ENCODE measurements at regions of chr5 and their contacts with region 1.

Region 1: GRCh38 chr5:42908509-42909488 is 97.1 kb upstream of the SELENOP start:
- H3K4me3 ChIP-seq: peak overlapping the region; percentile 40
- H3K27ac ChIP-seq: no peak overlapping the region
- H3K4me1 ChIP-seq: no peaks in the 10 kb centered on the region
- CTCF ChIP-seq: peak; percentile 87

Region 2: DNA sequence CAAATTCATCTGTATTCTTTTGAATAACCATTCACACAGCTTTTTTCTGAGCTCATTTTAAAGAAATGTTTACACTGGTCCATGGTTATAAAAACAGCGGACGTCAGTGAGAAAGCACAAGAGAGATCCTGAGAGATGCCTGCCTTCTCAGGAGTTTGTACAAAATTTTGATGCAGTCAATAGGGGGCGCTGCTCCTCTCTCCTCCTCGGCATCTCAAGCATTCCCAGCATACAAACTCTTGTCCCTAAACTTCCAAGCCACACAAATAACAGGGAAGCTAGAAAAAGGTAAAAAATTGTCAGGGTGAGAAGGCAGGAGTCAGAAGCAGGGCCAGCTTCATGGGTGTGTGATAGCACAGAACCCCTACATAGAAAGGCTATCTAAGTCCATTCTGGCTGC is 163.4 kb before region 1 on chr5:
- CTCF ChIA-PET with region 1: no interaction called
- POLR2A ChIA-PET with region 1: no interaction called
- H3K4me3 ChIP-seq: no peak overlapping the region
- H3K27ac ChIP-seq: no peak overlapping the region
- H3K4me1 ChIP-seq: no peaks in the 10 kb centered on the region
- CTCF ChIP-seq: 0 out of 2 replicates have a peak, but pooled peaks have one; percentile 11

Region 3: DNA sequence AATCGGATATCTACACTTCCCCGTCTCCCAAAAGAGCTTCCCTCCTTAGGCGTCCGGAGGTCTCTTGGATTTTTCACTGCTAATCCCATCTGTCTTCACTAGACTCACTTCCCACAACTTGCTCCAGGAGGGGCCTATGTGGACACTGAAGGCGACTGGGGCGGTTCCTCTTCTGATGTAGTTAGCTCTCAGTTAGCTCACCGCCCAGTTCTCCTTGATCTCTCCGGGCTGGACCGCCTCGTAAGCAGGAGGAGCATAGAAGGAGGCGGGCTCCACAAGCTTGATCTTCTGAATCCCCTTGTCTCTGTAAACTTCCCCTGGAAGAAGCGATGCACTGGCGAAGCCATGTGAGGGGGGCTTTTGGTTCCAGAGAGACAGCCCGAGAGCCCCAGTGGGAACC is 14.9 kb after region 1 on chr5:
- CTCF ChIA-PET with region 1: interaction called, 12 read pairs
- POLR2A ChIA-PET with region 1: no interaction called
- H3K4me3 ChIP-seq: no peak overlapping the region
- H3K27ac ChIP-seq: no peak overlapping the region
- H3K4me1 ChIP-seq: no peaks in the 10 kb centered on the region
- CTCF ChIP-seq: no peak

Region 4: DNA sequence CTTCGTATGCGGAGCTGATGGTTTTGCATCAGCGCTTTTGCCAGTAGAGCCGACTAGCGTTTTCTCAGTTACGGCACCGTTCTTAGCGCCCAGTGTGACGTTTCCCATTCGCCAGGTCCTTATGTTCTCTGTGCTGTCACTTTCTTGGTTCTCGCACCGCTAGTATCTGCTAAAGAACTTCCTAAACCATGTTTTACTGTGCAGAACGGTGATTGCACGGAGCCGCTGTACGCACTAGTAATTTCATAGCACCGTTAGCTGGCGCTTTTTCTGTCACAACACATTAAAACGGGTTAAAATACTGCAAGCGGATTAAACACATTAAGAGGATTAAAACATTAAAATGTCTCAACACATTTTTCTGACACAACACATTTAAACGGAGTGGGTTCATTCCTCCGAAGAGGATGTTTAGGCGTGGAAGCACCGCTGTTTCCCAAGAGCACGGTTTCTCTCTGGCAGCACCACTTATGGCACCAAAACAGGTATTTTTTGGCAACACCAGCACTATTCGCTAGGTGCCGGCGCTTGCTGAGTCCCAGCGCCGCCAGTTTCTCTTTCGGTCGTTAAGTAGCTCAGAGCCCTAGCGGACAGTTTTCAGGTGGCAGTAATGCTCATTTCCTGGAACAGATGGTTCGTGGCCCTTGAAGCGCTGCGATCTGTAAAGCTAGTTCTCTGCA is 111.0 kb after region 1 on chr5:
- CTCF ChIA-PET with region 1: interaction called, 46 read pairs
- POLR2A ChIA-PET with region 1: interaction called, 8 read pairs
- H3K4me3 ChIP-seq: peak overlapping the region; percentile 56
- H3K27ac ChIP-seq: peak overlapping the region; percentile 57; the same call in 1 of the 2 replicates
- H3K4me1 ChIP-seq: peaks cover 16% of the 10 kb centered on the region
- CTCF ChIP-seq: peak; percentile 88

Region 5: GRCh38 chr5:43066799-43067741 is 158.3 kb after region 1 on chr5:
- CTCF ChIA-PET with region 1: interaction called, 13 read pairs
- POLR2A ChIA-PET with region 1: interaction called, 3 read pairs
- H3K4me3 ChIP-seq: peak overlapping the region; percentile 63
- H3K27ac ChIP-seq: peak overlapping the region; percentile 87
- H3K4me1 ChIP-seq: peaks cover 2% of the 10 kb centered on the region; the same call in 1 of the 2 replicates
- CTCF ChIP-seq: no peak

Measured in HEK293 (cell line).